Activated CD4-positive, alpha-beta memory T cell treated with anti-CD3 and anti-CD28 coated beads for 36 hours (primary cell): ENCODE measurements at regions of chr16 and their contacts with region 1.

Region 1: DNA sequence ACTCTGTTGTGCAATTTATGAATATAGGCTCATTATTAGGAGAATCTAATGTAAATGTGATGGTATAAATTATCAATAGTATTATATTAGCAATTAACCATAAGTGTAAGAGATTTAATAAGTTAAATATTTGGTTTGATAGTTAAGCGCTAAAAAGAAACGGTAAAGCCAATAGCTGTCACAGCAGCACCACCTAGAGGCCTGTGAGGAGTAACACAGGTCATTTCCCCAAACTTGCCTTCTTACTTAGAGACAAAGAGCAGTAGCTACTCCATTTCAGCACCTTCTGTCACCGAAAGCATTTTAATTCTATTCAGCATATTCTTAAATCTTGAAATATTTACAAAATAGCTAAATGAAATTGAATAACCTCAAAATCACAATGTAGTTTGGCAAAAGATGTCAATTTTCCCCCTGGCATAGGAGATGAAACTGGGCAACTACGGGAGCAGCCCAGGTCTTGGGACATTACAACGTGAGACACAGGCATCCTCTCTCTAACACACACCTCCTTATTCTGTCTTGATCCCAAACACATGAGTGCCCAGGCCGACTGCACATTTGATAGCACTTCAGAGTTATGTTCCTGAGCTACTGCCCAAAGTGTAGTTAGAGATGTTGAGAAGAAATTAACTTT is 14.2 kb upstream of the DYNLRB2 start:
- DNase-seq: peak; percentile 63
- H3K4me3 Mint-ChIP-seq: no peak overlapping the region
- H3K27ac Mint-ChIP-seq: no peak overlapping the region
- H3K4me1 Mint-ChIP-seq: no peaks in the 10 kb centered on the region
- H3K27me3 Mint-ChIP-seq: peaks cover 1% of the 10 kb centered on the region

Region 2: DNA sequence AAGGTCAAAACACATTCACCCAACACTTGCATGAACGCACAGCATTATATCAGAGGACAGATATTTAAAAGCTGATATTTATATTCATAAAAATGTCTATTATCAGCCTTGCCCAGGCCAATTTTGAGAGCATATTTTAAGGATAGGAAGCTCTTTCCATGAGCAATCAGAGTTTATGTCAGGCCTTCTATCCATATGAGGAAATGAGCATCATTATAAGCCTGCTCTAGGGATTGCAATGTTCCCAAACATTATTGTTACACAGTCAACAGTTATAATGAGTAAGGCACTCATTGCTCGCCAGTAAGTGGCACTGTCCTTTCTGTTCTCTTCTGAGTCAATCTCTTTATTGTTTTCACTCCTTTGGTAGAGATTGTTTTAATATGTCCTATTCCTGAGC is 23.4 kb before region 1 on chr16:
- CTCF ChIA-PET with region 1: interaction called, 10 read pairs
- POLR2A ChIA-PET with region 1: interaction called, 3 read pairs
- intact Hi-C with region 1: no loop called
- DNase-seq: no peak
- H3K4me3 Mint-ChIP-seq: no peak overlapping the region
- H3K27ac Mint-ChIP-seq: no peak overlapping the region
- H3K4me1 Mint-ChIP-seq: peaks cover 9% of the 10 kb centered on the region
- H3K27me3 Mint-ChIP-seq: peaks cover 1% of the 10 kb centered on the region

Region 3: DNA sequence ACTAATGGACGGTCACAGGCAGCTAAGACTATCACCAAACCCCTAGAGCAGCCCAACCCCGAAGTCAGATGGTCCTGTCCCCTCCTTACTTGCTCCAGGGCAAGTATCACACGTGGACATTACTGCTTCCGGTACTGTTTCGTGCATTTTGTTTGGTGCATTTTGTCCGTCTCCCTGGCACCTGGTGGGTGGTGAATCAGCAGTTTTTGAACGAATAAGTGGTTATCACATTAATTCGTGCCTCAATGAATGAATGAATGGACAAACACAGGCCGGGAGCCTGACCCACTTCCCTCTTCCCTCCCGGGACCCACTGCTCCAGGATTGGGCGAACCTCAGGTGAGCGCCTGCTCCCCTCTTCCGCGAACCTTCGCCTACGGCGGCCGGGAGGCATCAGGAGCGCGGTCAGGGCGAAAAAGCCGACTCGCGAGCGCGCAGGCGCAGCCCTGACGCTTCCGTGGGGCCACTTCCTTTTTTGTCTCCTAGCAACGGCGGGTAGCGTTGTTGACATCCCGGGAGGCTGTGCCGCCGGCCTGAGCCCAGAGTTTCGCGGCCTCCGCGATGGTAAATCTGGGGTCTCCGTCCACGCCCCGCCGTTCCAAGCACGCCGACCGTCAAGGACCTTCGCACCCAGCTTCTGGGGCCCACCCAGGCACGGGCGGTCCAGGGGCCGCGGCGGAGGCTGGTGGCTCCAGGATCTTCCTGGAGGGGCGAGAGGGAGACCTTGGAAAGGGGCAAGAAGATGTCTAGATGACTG is 14.2 kb after region 1 on chr16 and contains the start of gene DYNLRB2:
- CTCF ChIA-PET with region 1: interaction called, 30 read pairs
- POLR2A ChIA-PET with region 1: no interaction called
- intact Hi-C with region 1: no loop called
- DNase-seq: peak; percentile 96
- H3K4me3 Mint-ChIP-seq: peak within 1 kb of the TSS; percentile 95
- H3K27ac Mint-ChIP-seq: peak within 1 kb of the TSS; percentile 94
- H3K4me1 Mint-ChIP-seq: peaks cover 26% of the 10 kb centered on the region
- H3K27me3 Mint-ChIP-seq: no peaks in the 10 kb centered on the region
- total RNA-seq, gene DYNLRB2: not detected

Region 4: GRCh38 chr16:80554033-80554432 is 27.5 kb after region 1 on chr16:
- CTCF ChIA-PET with region 1: no interaction called
- POLR2A ChIA-PET with region 1: no interaction called
- intact Hi-C with region 1: no loop called
- DNase-seq: no peak
- H3K4me3 Mint-ChIP-seq: no peak overlapping the region
- H3K27ac Mint-ChIP-seq: no peak overlapping the region
- H3K4me1 Mint-ChIP-seq: peaks cover 9% of the 10 kb centered on the region
- H3K27me3 Mint-ChIP-seq: no peaks in the 10 kb centered on the region

Region 5: GRCh38 chr16:80824718-80825364 is 298.3 kb after region 1 on chr16:
- CTCF ChIA-PET with region 1: interaction called, 171 read pairs
- POLR2A ChIA-PET with region 1: no interaction called
- intact Hi-C with region 1: loop called (anchors 1 kb)
- DNase-seq: peak; percentile 54
- H3K4me3 Mint-ChIP-seq: no peak overlapping the region
- H3K27ac Mint-ChIP-seq: no peak overlapping the region
- H3K4me1 Mint-ChIP-seq: no peaks in the 10 kb centered on the region
- H3K27me3 Mint-ChIP-seq: peaks cover 1% of the 10 kb centered on the region

Region 6: GRCh38 chr16:80852261-80852872 is 325.8 kb after region 1 on chr16:
- CTCF ChIA-PET with region 1: interaction called, 23 read pairs
- POLR2A ChIA-PET with region 1: no interaction called
- intact Hi-C with region 1: no loop called
- DNase-seq: peak; percentile 46
- H3K4me3 Mint-ChIP-seq: no peak overlapping the region
- H3K27ac Mint-ChIP-seq: no peak overlapping the region
- H3K4me1 Mint-ChIP-seq: no peaks in the 10 kb centered on the region
- H3K27me3 Mint-ChIP-seq: peaks cover 6% of the 10 kb centered on the region